ENCODE measurements at regions of chr3 and their contacts with region 1.

Region 1: GRCh38 chr3:66407611-66408218 is 93.1 kb downstream of the LRIG1 start:
- DNase-seq: peak; percentile 71 to 82
- ATAC-seq: peak; percentile 48 to 77 (median 65)
- H3K4me3 ChIP-seq: no peak overlapping the region
- H3K27ac ChIP-seq: peak overlapping the region in 3 of 10 donors; percentile 33 to 76 (median 41)
- H3K4me1 ChIP-seq: peaks cover 17 to 72% (median 56%) of the 10 kb centered on the region in 9 donors
- H3K27me3 ChIP-seq: no peaks in the 10 kb centered on the region
- CTCF ChIP-seq: peak; percentile 87 to 98 (median 95)

Region 2: DNA sequence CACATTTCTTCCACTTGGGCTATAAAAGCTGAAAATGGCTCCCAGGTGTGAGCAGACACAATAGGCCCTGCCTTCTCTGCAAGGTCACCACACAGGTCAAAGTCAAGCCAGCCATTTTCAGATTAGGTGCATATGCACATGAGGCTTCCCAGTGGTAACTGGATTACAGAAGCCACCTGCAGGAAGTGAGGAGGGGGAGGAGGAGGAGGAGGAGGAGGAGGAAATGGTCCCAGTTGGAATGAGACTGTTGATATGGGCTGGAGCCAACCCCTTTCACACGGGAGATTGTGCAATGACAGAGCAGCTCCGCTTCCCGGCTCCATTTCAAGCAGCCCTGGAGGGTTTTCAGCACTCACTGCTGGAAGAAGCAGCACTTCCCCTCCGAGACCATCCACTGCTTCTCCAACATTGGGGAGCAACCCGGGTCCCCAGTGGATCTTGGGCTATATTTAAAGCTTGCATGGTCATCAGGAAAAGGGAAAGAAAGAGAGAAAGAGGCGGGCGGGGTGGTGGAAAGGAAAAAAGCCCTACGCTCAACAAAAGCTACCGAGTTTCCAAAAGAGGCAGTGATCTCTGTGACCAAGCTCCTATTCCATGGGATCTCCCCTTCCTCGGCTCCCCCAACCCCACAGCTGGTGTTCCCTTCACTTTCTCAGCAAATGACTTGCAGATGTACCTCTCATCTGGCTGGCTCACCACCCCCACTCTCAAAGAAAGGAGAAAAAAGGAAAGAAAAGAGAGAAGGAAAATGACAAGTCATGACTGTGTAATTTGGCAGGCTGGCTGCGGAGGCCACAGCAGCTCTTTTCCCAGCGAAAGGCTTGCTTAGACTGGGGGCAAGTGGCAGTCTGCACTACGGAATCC is 34.8 kb after region 1 on chr3:
- intact Hi-C with region 1: loop called in 1 of 10 experiments (anchors 5 kb)
- DNase-seq: peak; percentile 66 to 87
- ATAC-seq: peak; percentile 85 to 93 (median 90)
- H3K4me3 ChIP-seq: peak overlapping the region in 5 of 10 donors; percentile 8 to 25 (median 16)
- H3K27ac ChIP-seq: peak overlapping the region in 9 of 10 donors; percentile 54 to 86 (median 70)
- H3K4me1 ChIP-seq: peaks cover 35 to 88% (median 58%) of the 10 kb centered on the region in 9 donors
- H3K27me3 ChIP-seq: no peaks in the 10 kb centered on the region
- CTCF ChIP-seq: peak in 1 of 9 donors; percentile 11

Region 3: DNA sequence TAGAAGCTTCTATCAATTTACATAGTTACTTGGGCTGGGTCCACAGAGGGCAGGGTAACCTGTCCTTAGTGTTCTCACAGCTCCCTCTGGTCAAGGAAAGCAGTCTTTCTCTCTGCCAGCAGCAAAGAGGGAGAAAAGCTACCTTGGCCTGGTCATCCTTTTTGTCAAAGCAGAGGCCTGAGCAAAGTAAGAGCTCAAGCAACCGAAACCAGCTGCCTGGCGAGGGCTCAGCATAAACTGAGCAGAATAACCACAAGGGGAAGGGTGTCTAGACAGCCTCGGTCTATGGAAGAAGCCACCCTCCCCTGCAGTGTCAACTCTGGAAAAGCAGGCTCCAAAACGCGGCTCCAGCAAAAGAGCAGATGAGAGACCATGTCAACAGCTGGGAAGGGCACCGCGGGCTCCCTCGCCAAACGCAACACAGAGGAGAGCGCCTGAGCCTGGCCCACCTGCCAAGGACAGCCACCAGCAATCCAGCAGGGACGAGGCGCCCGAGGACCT is 75.7 kb after region 1 on chr3:
- intact Hi-C with region 1: no loop called
- DNase-seq: peak; percentile 51 to 60
- ATAC-seq: peak; percentile 47 to 83 (median 72)
- H3K4me3 ChIP-seq: peak overlapping the region in 1 of 10 donors; percentile 11
- H3K27ac ChIP-seq: peak overlapping the region; percentile 71 to 92 (median 84)
- H3K4me1 ChIP-seq: peaks cover 42 to 99% (median 92%) of the 10 kb centered on the region in 9 donors
- H3K27me3 ChIP-seq: no peaks in the 10 kb centered on the region
- CTCF ChIP-seq: peak in 1 of 9 donors; percentile 9

Region 4: GRCh38 chr3:66809595-66809958 is 401.9 kb after region 1 on chr3:
- intact Hi-C with region 1: loop called in 2 of 10 experiments (anchors 2 kb)
- DNase-seq: no peak
- ATAC-seq: peak in 1 of 8 donors; percentile 21
- H3K4me3 ChIP-seq: no peak overlapping the region
- H3K27ac ChIP-seq: peak overlapping the region in 1 of 10 donors; percentile 39
- H3K4me1 ChIP-seq: peaks cover 0 to 14% (median 4%) of the 10 kb centered on the region in 9 donors
- H3K27me3 ChIP-seq: no peaks in the 10 kb centered on the region
- CTCF ChIP-seq: no peak